CD4-positive, alpha-beta memory T cell (primary cell): ENCODE measurements at regions of chr5 and their contacts with region 1.

Region 1: DNA sequence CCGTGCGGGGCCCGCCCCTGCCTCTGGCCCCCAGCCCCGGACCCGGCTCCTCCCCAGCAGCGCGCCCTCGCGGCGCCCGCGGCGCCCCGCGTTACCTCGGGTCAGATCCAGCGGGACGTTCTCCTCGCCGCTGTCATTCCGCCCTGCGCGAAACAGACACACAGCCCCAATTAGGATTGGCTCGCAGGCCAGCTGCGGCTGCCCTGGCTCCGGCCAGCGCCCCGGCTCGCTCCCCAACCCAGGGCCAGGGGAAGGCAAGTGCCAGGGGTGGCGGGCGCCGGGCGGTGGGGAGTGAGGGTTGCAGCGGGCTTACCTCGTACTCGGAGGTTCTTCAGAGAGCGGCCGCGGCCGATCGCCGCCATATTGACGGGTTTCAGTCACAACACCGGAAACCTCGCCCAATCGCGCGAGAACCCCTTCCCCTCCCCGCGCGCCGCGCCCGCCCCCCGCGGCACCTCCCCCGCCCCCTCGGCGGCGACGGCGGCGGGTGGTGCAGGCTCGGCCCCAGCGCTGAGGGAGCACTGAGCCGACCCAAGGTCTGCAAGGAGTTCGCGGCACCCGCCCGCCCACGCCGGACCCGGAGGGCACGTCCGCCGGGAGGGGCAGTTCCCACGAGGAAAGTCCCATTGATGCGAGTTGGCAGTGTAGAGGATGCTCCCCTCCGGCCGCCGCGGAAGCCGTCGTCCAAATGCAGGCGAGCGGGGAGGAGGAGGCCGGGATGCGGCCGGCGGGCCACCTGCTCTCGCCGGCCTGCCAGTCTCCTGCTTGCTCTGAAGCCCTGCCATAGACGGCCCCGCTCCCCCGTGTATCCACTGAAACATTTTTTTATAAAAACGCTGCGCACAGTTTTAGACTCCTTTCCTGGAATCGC is at the start of gene RICTOR:
- DNase-seq: peak; percentile 87 to 90 (median 89)
- H3K4me3 ChIP-seq: peak within 1 kb of the TSS; percentile 50 to 56
- H3K4me3 Mint-ChIP-seq: peak within 1 kb of the TSS; percentile 97 to 99 (median 98)
- H3K27ac ChIP-seq: peak within 1 kb of the TSS; percentile 97
- H3K27ac Mint-ChIP-seq: peak within 1 kb of the TSS; percentile 96 to 99 (median 98)
- H3K4me1 ChIP-seq: peaks cover 46% of the 10 kb centered on the region
- H3K4me1 Mint-ChIP-seq: peaks cover 25 to 59% (median 39%) of the 10 kb centered on the region in 4 donors
- H3K27me3 ChIP-seq: peaks cover 22% of the 10 kb centered on the region
- H3K27me3 Mint-ChIP-seq: peaks cover 14 to 18% of the 10 kb centered on the region in 2 donors
- total RNA-seq, gene RICTOR: 85.0 to 94.9 TPM

Region 2: DNA sequence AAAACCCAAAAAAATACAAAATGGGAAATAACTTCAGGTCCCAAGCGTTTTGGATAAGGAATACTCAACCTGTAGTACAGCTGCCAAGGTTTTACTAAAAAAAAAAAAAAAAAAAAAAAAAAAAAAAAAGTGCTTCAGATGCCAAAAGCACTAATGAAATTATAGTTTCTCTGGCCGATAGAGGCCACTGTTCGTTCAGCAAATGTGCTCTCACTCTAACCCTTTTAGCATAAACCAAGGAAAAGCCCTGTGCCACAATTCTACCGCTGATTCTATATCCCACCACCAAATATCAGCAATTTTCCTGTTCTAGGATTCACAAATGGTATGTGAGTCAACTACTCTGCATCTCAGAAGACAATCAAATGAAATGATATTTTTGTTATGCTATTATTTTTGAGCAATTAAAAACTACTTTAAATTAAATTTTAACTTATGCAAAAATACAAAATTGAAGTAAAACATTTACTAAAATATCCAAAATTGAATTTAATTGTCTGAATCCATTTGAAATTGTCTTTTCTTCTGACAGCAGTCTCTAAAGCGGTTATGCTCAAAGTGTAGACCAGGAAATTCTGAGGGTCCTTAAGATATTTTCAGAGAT is 79.8 kb before region 1 on chr5:
- CTCF ChIA-PET with region 1: interaction called, 13 read pairs
- POLR2A ChIA-PET with region 1: no interaction called
- intact Hi-C with region 1: loop called (anchors 5 kb)
- DNase-seq: peak; percentile 27 to 45 (median 39)
- H3K4me3 ChIP-seq: no peak overlapping the region
- H3K4me3 Mint-ChIP-seq: no peak overlapping the region
- H3K27ac ChIP-seq: no peak overlapping the region
- H3K27ac Mint-ChIP-seq: peak overlapping the region in 1 of 7 donors; percentile 40
- H3K4me1 ChIP-seq: peaks cover 3% of the 10 kb centered on the region
- H3K4me1 Mint-ChIP-seq: peaks cover 5 to 33% (median 20%) of the 10 kb centered on the region in 4 donors
- H3K27me3 ChIP-seq: no peaks in the 10 kb centered on the region
- H3K27me3 Mint-ChIP-seq: no peaks in the 10 kb centered on the region

Region 3: GRCh38 chr5:39024884-39025283 is 49.4 kb before region 1 on chr5:
- CTCF ChIA-PET with region 1: no interaction called
- POLR2A ChIA-PET with region 1: no interaction called
- intact Hi-C with region 1: no loop called
- DNase-seq: no peak
- H3K4me3 ChIP-seq: no peak overlapping the region
- H3K4me3 Mint-ChIP-seq: peak overlapping the region in 2 of 8 donors; percentile 16 to 66
- H3K27ac ChIP-seq: no peak overlapping the region
- H3K27ac Mint-ChIP-seq: no peak overlapping the region
- H3K4me1 ChIP-seq: peaks cover 43% of the 10 kb centered on the region
- H3K4me1 Mint-ChIP-seq: peaks cover 39 to 54% (median 47%) of the 10 kb centered on the region in 4 donors
- H3K27me3 ChIP-seq: no peaks in the 10 kb centered on the region
- H3K27me3 Mint-ChIP-seq: no peaks in the 10 kb centered on the region

Region 4: GRCh38 chr5:39058178-39058921 is 15.9 kb before region 1 on chr5:
- CTCF ChIA-PET with region 1: interaction called, 3 read pairs
- POLR2A ChIA-PET with region 1: interaction called, 7 read pairs
- intact Hi-C with region 1: loop called (anchors 1 kb)
- DNase-seq: no peak
- H3K4me3 ChIP-seq: peak overlapping the region in 1 of 2 donors; percentile 17
- H3K4me3 Mint-ChIP-seq: peak overlapping the region; percentile 1 to 60 (median 52)
- H3K27ac ChIP-seq: peak overlapping the region; percentile 35
- H3K27ac Mint-ChIP-seq: peak overlapping the region; percentile 6 to 70 (median 41)
- H3K4me1 ChIP-seq: peaks cover 86% of the 10 kb centered on the region
- H3K4me1 Mint-ChIP-seq: peaks cover 57 to 73% (median 64%) of the 10 kb centered on the region in 4 donors
- H3K27me3 ChIP-seq: no peaks in the 10 kb centered on the region
- H3K27me3 Mint-ChIP-seq: no peaks in the 10 kb centered on the region

Region 5: GRCh38 chr5:39106322-39106721 is 32.1 kb after region 1 on chr5:
- CTCF ChIA-PET with region 1: no interaction called
- POLR2A ChIA-PET with region 1: no interaction called
- intact Hi-C with region 1: loop called (anchors 1 kb)
- DNase-seq: peak in 1 of 5 donors; percentile 19
- H3K4me3 ChIP-seq: no peak overlapping the region
- H3K4me3 Mint-ChIP-seq: no peak overlapping the region
- H3K27ac ChIP-seq: no peak overlapping the region
- H3K27ac Mint-ChIP-seq: peak overlapping the region in 4 of 7 donors; percentile 31 to 70 (median 52)
- H3K4me1 ChIP-seq: peaks cover 7% of the 10 kb centered on the region
- H3K4me1 Mint-ChIP-seq: peaks cover 19 to 45% (median 21%) of the 10 kb centered on the region in 4 donors
- H3K27me3 ChIP-seq: no peaks in the 10 kb centered on the region
- H3K27me3 Mint-ChIP-seq: no peaks in the 10 kb centered on the region